ENCODE measurements at regions of chr15 and their contacts with region 1.

Region 1: GRCh38 chr15:40857601-40858341 is 13.9 kb downstream of the SPINT1 start:
- DNase-seq: no peak
- ATAC-seq: peak; percentile 89
- H3K4me3 ChIP-seq: no peak overlapping the region
- H3K27ac ChIP-seq: no peak overlapping the region
- H3K4me1 ChIP-seq: peaks cover 4% of the 10 kb centered on the region
- H3K27me3 ChIP-seq: no peaks in the 10 kb centered on the region
- CTCF ChIP-seq: peak; percentile 95 to 99 (median 98)
- EP300 ChIP-seq: no peak
- POLR2A ChIP-seq: no peak
- RAD21 ChIP-seq: peak; percentile 95

Region 2: DNA sequence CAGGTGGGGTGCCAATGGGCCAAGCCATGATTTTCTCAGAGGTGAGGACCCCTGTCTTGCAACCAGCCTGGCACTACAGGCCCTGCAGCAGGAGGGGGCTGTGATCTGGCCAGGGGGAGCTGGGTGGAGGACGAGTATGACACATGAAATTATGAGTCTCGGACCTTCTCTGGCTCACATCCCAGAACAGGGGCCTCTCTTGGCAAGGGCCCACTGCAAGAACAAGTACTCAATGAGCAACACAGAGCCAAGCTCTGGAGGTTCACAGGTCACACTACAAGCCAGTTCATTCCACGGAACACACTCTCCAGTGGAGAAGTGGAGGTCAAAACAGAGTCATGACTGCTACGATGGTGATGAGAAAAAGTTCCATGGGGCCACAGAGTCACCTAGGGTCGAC is 321.3 kb before region 1 on chr15:
- CTCF ChIA-PET with region 1: no interaction called
- POLR2A ChIA-PET with region 1: no interaction called
- RAD21 ChIA-PET with region 1: no interaction called
- SMC1A ChIA-PET with region 1: no interaction called
- in situ Hi-C with region 1: no loop called
- intact Hi-C with region 1: no loop called
- DNase-seq: no peak
- ATAC-seq: no peak
- H3K4me3 ChIP-seq: no peak overlapping the region
- H3K27ac ChIP-seq: no peak overlapping the region
- H3K4me1 ChIP-seq: peaks cover under 1% of the 10 kb centered on the region
- H3K27me3 ChIP-seq: no peaks in the 10 kb centered on the region
- CTCF ChIP-seq: no peak
- EP300 ChIP-seq: no peak
- POLR2A ChIP-seq: no peak
- RAD21 ChIP-seq: no peak

Region 3: DNA sequence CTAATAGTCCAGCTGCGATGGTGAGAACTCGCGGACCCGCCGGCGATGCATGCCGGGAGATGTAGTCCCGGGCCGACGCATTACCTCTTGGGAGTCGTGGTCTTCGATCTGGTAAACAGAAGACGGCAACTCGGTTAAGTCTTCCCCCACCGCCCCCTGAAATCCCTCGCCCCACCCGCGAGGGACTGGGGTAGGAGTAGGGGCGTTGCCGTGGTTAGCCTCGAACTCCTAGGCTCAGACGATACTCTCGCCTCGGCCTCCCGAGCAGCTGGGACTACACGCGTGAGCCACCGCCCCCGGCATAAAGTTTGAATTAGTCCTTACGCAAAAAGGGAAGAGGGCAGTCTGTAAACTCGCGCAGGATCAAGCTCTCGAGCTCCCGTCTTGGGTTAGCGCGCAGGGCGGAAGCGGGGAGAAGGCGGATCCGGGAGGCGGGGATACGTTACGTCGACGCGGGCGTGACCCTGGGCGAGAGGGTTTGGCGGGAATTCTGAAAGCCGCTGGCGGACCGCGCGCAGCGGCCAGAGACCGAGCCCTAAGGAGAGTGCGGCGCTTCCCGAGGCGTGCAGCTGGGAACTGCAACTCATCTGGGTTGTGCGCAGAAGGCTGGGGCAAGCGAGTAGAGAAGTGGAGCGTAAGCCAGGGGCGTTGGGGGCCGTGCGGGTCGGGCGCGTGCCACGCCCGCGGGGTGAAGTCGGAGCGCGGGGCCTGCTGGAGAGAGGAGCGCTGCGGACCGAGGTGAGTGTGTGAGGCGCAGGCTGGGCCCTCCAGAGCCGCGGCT is 162.9 kb before region 1 on chr15 and contains the start of gene RAD51:
- CTCF ChIA-PET with region 1: interaction called, 10 read pairs
- POLR2A ChIA-PET with region 1: interaction called, 5 read pairs
- RAD21 ChIA-PET with region 1: interaction called, 3 read pairs
- SMC1A ChIA-PET with region 1: interaction called, 10 read pairs
- in situ Hi-C with region 1: no loop called
- intact Hi-C with region 1: no loop called
- DNase-seq: peak; percentile 84
- ATAC-seq: peak; percentile 95
- H3K4me3 ChIP-seq: peak within 1 kb of the TSS; percentile 96
- H3K27ac ChIP-seq: peak within 1 kb of the TSS; percentile 86
- H3K4me1 ChIP-seq: peaks cover 2% of the 10 kb centered on the region
- H3K27me3 ChIP-seq: no peaks in the 10 kb centered on the region
- CTCF ChIP-seq: no peak
- EP300 ChIP-seq: 0 out of 4 replicates have a peak, but pooled peaks of 1 of the 2 experiments have one; percentile 40
- POLR2A ChIP-seq: peak; percentile 82
- RAD21 ChIP-seq: no peak
- polyA plus RNA-seq, gene RAD51: 13.1 to 23.6 TPM

Region 4: DNA sequence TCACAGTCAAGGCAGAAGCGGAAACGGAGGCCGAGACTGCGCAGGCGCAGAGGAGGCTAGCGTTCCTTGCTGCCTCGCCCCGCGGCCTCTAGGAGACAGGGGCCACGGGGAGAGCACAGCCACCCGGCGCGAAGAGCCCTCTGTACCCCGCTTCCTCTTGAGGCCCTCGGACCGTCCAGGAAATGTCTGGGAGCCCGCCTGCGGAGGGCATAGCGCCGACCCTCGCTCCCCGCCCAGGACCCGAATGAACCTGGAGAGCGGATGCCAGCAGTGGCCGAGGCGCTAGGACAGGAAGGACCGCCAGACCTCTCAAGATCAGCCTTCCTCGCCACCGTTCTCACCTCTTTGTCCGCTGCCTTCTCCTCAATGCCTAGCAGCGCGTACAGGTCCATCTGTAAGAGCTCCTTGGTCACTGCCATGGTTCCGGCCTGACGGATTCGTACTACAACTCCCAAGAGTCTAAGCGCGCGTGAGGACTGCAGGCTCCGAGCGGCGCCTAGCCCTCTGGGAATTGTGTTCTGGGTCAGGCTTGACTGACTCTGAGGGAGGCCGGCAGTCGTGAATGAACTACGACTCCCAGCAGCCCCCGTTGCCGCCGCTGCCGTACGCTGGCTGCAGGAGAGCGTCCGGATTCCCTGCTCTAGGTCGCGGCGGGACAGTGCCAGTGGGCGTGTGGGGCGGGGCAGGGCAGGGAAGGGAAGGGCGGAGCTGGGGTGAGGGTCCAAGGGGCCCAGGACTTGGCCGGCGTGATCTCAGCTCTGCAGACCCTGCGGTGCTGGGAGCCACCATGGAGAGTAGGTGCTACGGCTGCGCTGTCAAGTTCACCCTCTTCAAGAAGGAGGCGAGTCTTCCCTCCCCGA is 50.5 kb before region 1 on chr15 and contains the starts of genes DNAJC17 and ZFYVE19:
- CTCF ChIA-PET with region 1: interaction called, 19 read pairs
- POLR2A ChIA-PET with region 1: interaction called, 7 read pairs
- RAD21 ChIA-PET with region 1: interaction called, 19 read pairs
- SMC1A ChIA-PET with region 1: interaction called, 6 read pairs
- in situ Hi-C with region 1: no loop called
- intact Hi-C with region 1: no loop called
- DNase-seq: peak; percentile 93
- ATAC-seq: peak; percentile 97
- H3K4me3 ChIP-seq: peak within 1 kb of the TSS; percentile 79
- H3K27ac ChIP-seq: peak within 1 kb of the TSS; percentile 98
- H3K4me1 ChIP-seq: peaks cover 15% of the 10 kb centered on the region; the same call in 1 of the 2 replicates
- H3K27me3 ChIP-seq: no peaks in the 10 kb centered on the region
- CTCF ChIP-seq: peak in 1 of 3 experiments; percentile 20; a peak in 1 of 6 replicates
- EP300 ChIP-seq: no peak
- POLR2A ChIP-seq: peak; percentile 90
- RAD21 ChIP-seq: no peak
- polyA plus RNA-seq, gene DNAJC17: 6.1 to 11.5 TPM
- polyA plus RNA-seq, gene ZFYVE19: 1.7 to 4.4 TPM

Region 5: GRCh38 chr15:40847205-40847961 is 10.4 kb before region 1 on chr15:
- CTCF ChIA-PET with region 1: interaction called, 140 read pairs
- POLR2A ChIA-PET with region 1: interaction called, 17 read pairs
- RAD21 ChIA-PET with region 1: interaction called, 41 read pairs
- SMC1A ChIA-PET with region 1: interaction called, 47 read pairs
- in situ Hi-C with region 1: no loop called
- intact Hi-C with region 1: no loop called
- DNase-seq: peak; percentile 57
- ATAC-seq: peak; percentile 82
- H3K4me3 ChIP-seq: peak overlapping the region; percentile 45; the same call in 1 of the 2 replicates
- H3K27ac ChIP-seq: peak overlapping the region; percentile 76
- H3K4me1 ChIP-seq: peaks cover 26% of the 10 kb centered on the region
- H3K27me3 ChIP-seq: peaks cover 1 to 3% of the 10 kb centered on the region in 2 experiments; a peak in 1 of 4 replicates
- CTCF ChIP-seq: no peak
- EP300 ChIP-seq: no peak
- POLR2A ChIP-seq: no peak
- RAD21 ChIP-seq: no peak

Region 6: GRCh38 chr15:40886586-40886985 is 28.8 kb after region 1 on chr15:
- CTCF ChIA-PET with region 1: interaction called, 32 read pairs
- POLR2A ChIA-PET with region 1: interaction called, 8 read pairs
- RAD21 ChIA-PET with region 1: no interaction called
- SMC1A ChIA-PET with region 1: interaction called, 38 read pairs
- in situ Hi-C with region 1: loop called (anchors 5 kb)
- intact Hi-C with region 1: no loop called
- DNase-seq: no peak
- ATAC-seq: no peak
- H3K4me3 ChIP-seq: no peak overlapping the region
- H3K27ac ChIP-seq: no peak overlapping the region
- H3K4me1 ChIP-seq: peaks cover 17% of the 10 kb centered on the region
- H3K27me3 ChIP-seq: no peaks in the 10 kb centered on the region
- CTCF ChIP-seq: no peak
- EP300 ChIP-seq: no peak
- POLR2A ChIP-seq: no peak
- RAD21 ChIP-seq: no peak

Region 7: GRCh38 chr15:41695750-41696426 is 838.1 kb after region 1 on chr15:
- CTCF ChIA-PET with region 1: no interaction called
- POLR2A ChIA-PET with region 1: no interaction called
- RAD21 ChIA-PET with region 1: no interaction called
- SMC1A ChIA-PET with region 1: no interaction called
- in situ Hi-C with region 1: no loop called
- intact Hi-C with region 1: no loop called
- DNase-seq: peak; percentile 39
- ATAC-seq: peak; percentile 97
- H3K4me3 ChIP-seq: no peak overlapping the region
- H3K27ac ChIP-seq: no peak overlapping the region
- H3K4me1 ChIP-seq: peaks cover 6% of the 10 kb centered on the region; the same call in 1 of the 2 replicates
- H3K27me3 ChIP-seq: no peaks in the 10 kb centered on the region
- CTCF ChIP-seq: peak; percentile 39 to 63 (median 52); a peak in 5 of 6 replicates
- EP300 ChIP-seq: no peak
- POLR2A ChIP-seq: no peak
- RAD21 ChIP-seq: peak; percentile 57

Measured in GM12878 (cell line).